Ovary (tissue), 10 donors: ENCODE measurements at regions of chr7 and their contacts with region 1.

Region 1: GRCh38 chr7:901381-902154 is 25.2 kb downstream of the GET4 start:
- DNase-seq: peak; percentile 68 to 87 (median 84)
- H3K4me3 ChIP-seq: no peak overlapping the region
- H3K27ac ChIP-seq: peak overlapping the region in 1 of 2 donors; percentile 16
- H3K4me1 ChIP-seq: peaks cover 6% of the 10 kb centered on the region
- H3K27me3 ChIP-seq: no peaks in the 10 kb centered on the region
- CTCF ChIP-seq: no peak
- EP300 ChIP-seq: no peak
- POLR2A ChIP-seq: no peak

Region 2: DNA sequence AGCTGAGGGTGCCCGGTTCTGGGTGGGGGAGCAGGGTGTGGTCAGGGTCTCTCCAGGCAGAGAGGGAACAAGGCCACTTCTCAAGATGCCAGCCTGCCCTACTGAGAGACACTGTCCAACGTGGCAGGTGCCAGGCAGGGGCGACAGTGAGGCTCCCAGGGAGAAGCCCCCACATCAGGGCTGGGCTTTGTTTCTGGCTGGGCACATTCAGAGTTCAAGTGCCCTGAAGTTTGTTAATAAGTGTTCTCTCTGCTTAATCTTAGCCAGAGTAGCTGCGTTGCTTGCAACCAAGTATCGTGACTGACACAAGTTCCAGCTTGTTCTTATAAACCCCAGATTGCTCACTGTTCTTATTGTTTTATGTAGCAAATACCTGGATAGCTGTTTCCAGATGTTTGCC is 589.8 kb before region 1 on chr7:
- intact Hi-C with region 1: no loop called
- DNase-seq: peak in 1 of 5 donors; percentile 7
- H3K4me3 ChIP-seq: no peak overlapping the region
- H3K27ac ChIP-seq: no peak overlapping the region
- H3K4me1 ChIP-seq: no peaks in the 10 kb centered on the region
- H3K27me3 ChIP-seq: no peaks in the 10 kb centered on the region
- CTCF ChIP-seq: no peak
- EP300 ChIP-seq: no peak
- POLR2A ChIP-seq: no peak

Region 3: GRCh38 chr7:1181640-1182039 is 280.1 kb after region 1 on chr7:
- intact Hi-C with region 1: loop called in 1 of 4 experiments (anchors 10 kb)
- DNase-seq: no peak
- H3K4me3 ChIP-seq: no peak overlapping the region
- H3K27ac ChIP-seq: no peak overlapping the region
- H3K4me1 ChIP-seq: no peaks in the 10 kb centered on the region
- H3K27me3 ChIP-seq: no peaks in the 10 kb centered on the region
- CTCF ChIP-seq: no peak
- EP300 ChIP-seq: no peak
- POLR2A ChIP-seq: no peak